Heart left ventricle (tissue), 16 donors: ENCODE measurements at regions of chr5 and their contacts with region 1.

Region 1: GRCh38 chr5:32709781-32710549 is 1.2 kb upstream of the NPR3 start:
- DNase-seq: peak; percentile 58 to 78 (median 71)
- ATAC-seq: peak; percentile 51 to 58 (median 56)
- H3K4me3 ChIP-seq: peak overlapping the region; percentile 52 to 80 (median 62)
- H3K27ac ChIP-seq: peak overlapping the region; percentile 58 to 97 (median 85)
- H3K4me1 ChIP-seq: peaks cover 0 to 48% (median 18%) of the 10 kb centered on the region in 12 donors
- H3K27me3 ChIP-seq: peaks cover 0 to 62% (median 0%) of the 10 kb centered on the region in 9 donors
- CTCF ChIP-seq: peak; percentile 40 to 84 (median 64)
- POLR2A ChIP-seq: peak in 1 of 2 donors; percentile 14

Region 2: DNA sequence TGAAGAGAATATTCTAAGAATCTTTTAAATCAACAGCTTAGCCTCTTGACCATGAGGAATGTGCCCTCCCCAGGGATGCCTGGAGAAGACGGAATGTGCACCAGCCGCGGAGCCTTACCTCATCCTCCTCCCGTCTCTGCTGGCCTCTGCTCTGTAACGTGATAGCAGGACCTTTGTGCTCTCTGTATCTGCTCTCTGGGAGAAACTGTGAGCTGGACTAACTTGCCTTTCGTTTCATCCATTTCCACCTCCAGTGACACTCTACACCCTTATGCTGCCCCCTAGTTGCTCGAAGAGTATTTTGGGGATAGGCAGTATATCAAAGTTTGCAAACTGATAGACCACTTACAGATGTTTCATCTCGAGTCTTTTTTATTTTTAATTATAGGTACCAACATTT is 142.6 kb after region 1 on chr5:
- intact Hi-C with region 1: loop called in 7 of 10 experiments (anchors 5 to 10 kb)
- DNase-seq: peak in 3 of 5 donors; percentile 7 to 46 (median 38)
- ATAC-seq: peak; percentile 55 to 82 (median 72)
- H3K4me3 ChIP-seq: no peak overlapping the region
- H3K27ac ChIP-seq: no peak overlapping the region
- H3K4me1 ChIP-seq: peaks cover 0 to 7% (median 0%) of the 10 kb centered on the region in 12 donors
- H3K27me3 ChIP-seq: no peaks in the 10 kb centered on the region
- CTCF ChIP-seq: peak in 11 of 12 donors; percentile 14 to 51 (median 35)
- POLR2A ChIP-seq: no peak

Region 3: DNA sequence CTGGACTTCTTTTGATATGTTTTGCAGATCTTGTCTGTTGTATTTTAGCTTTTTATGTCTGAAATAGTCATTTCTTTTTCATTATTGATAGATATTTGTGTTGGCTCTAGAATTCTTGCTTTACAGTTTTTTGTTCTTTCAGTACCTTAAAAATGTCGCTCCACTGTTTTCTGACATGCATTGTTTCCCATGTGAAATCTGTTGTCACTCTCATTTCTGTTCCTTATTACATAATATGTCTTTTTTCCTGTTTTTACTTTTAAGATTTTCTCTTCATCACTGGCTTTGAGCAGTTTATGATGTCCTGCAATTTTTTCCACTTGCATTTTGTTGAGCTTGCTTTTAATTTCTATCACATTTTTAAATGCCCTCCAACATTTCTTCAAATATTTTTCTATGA is 460.4 kb after region 1 on chr5:
- intact Hi-C with region 1: loop called in 2 of 10 experiments (anchors 5 to 10 kb)
- DNase-seq: no peak
- ATAC-seq: no peak
- H3K4me3 ChIP-seq: no peak overlapping the region
- H3K27ac ChIP-seq: no peak overlapping the region
- H3K4me1 ChIP-seq: no peaks in the 10 kb centered on the region
- H3K27me3 ChIP-seq: no peaks in the 10 kb centered on the region
- CTCF ChIP-seq: no peak
- POLR2A ChIP-seq: no peak

Region 4: GRCh38 chr5:33299621-33300208 is 589.8 kb after region 1 on chr5:
- intact Hi-C with region 1: loop called in 8 of 10 experiments (anchors 5 to 10 kb)
- DNase-seq: no peak
- ATAC-seq: peak; percentile 52 to 87 (median 77)
- H3K4me3 ChIP-seq: no peak overlapping the region
- H3K27ac ChIP-seq: peak overlapping the region in 9 of 12 donors; percentile 13 to 72 (median 37)
- H3K4me1 ChIP-seq: peaks cover 0 to 19% (median 8%) of the 10 kb centered on the region in 12 donors
- H3K27me3 ChIP-seq: no peaks in the 10 kb centered on the region
- CTCF ChIP-seq: peak; percentile 15 to 64 (median 42)
- POLR2A ChIP-seq: no peak

Region 5: GRCh38 chr5:33409435-33410170 is 699.6 kb after region 1 on chr5:
- intact Hi-C with region 1: loop called in 1 of 10 experiments (anchors 10 kb)
- DNase-seq: no peak
- ATAC-seq: no peak
- H3K4me3 ChIP-seq: no peak overlapping the region
- H3K27ac ChIP-seq: peak overlapping the region in 1 of 12 donors; percentile 78
- H3K4me1 ChIP-seq: no peaks in the 10 kb centered on the region
- H3K27me3 ChIP-seq: no peaks in the 10 kb centered on the region
- CTCF ChIP-seq: no peak
- POLR2A ChIP-seq: no peak